ENCODE measurements at regions of chr6 and their contacts with region 1.

Region 1: GRCh38 chr6:53484476-53485280 is 60.2 kb downstream of the GCLC start:
- DNase-seq: peak; percentile 79
- H3K4me3 ChIP-seq: no peak overlapping the region
- H3K27ac ChIP-seq: no peak overlapping the region
- H3K4me1 ChIP-seq: peaks cover 4% of the 10 kb centered on the region
- CTCF ChIP-seq: peak; percentile 100

Region 2: DNA sequence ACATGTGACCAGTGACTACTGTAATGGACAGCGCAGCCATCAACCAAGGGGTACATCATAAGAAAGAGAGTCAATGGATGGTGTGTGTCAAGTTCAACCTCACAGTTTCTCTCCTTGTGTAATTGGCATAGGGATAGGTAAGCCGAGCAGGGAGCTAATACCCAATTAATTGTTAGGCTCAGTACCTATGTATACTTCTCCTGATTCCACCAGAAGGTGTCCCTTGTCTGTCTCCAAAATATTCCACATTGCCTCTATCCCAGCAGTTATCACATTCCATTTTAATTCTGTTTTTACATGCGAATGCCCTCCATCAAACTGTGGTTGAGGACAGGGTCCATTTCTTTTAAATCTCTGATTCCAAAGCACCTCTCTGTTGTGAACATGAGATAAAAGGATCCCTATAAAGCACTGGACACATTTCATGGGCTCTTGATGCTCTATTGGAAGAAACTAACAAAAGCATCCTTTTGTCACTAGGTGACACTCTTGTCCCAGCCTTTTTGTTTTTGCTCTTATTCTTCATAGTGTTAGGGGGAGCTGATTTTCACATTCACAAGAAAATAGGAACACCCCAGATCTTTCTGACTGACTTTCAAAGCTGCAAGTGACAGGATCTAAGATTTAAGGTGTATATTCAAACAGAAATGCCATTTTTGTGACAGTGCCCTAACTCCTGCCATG is 380.5 kb before region 1 on chr6:
- CTCF ChIA-PET with region 1: no interaction called
- POLR2A ChIA-PET with region 1: no interaction called
- intact Hi-C with region 1: loop called (anchors 5 kb)
- DNase-seq: peak; percentile 19
- H3K4me3 ChIP-seq: no peak overlapping the region
- H3K27ac ChIP-seq: no peak overlapping the region
- H3K4me1 ChIP-seq: no peaks in the 10 kb centered on the region
- CTCF ChIP-seq: peak; percentile 65

Region 3: DNA sequence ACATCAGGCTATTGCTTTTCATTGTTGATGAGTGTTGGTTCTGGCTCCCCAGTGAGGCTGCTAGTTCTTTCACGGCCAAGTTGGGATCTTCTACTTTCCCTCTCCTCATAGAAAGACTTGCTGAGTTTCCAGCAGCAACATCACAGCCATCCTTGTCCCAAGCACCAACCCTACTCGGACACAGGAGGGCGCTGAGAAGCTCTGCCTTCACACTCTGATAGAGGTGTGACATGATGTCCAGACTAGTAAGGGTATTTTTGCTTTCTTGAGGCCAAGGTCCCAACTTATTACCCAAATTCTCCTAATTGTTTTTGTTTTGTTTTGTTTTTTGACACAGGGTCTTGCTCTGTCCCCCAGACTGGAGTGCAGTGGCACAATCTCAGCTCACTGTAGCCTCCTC is 333.0 kb before region 1 on chr6:
- CTCF ChIA-PET with region 1: no interaction called
- POLR2A ChIA-PET with region 1: no interaction called
- intact Hi-C with region 1: loop called (anchors 5 kb)
- DNase-seq: peak; percentile 35
- H3K4me3 ChIP-seq: no peak overlapping the region
- H3K27ac ChIP-seq: no peak overlapping the region
- H3K4me1 ChIP-seq: no peaks in the 10 kb centered on the region
- CTCF ChIP-seq: peak; percentile 74

Region 4: DNA sequence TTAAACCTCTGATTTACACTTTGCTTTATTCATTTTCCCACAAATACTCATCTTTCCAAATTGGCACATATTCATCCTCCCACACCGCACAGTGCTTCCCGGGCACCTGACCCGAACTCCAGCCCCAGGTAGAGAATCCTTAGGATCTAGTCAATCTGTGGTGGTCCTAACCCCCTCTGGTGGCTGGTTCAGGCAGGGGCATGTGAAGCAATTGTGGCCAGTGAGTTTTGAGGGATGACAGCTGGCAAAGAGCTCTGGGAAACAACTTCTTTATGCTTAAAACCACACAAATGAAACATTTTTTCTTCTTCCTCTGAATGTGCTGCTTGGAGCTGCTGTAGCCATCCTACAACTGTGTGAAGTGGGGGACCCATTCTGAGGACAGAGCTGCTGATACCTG is 190.6 kb before region 1 on chr6:
- CTCF ChIA-PET with region 1: no interaction called
- POLR2A ChIA-PET with region 1: no interaction called
- intact Hi-C with region 1: loop called (anchors 2 kb)
- DNase-seq: peak; percentile 54
- H3K4me3 ChIP-seq: no peak overlapping the region
- H3K27ac ChIP-seq: no peak overlapping the region
- H3K4me1 ChIP-seq: peaks cover 16% of the 10 kb centered on the region
- CTCF ChIP-seq: peak; percentile 95

Region 5: DNA sequence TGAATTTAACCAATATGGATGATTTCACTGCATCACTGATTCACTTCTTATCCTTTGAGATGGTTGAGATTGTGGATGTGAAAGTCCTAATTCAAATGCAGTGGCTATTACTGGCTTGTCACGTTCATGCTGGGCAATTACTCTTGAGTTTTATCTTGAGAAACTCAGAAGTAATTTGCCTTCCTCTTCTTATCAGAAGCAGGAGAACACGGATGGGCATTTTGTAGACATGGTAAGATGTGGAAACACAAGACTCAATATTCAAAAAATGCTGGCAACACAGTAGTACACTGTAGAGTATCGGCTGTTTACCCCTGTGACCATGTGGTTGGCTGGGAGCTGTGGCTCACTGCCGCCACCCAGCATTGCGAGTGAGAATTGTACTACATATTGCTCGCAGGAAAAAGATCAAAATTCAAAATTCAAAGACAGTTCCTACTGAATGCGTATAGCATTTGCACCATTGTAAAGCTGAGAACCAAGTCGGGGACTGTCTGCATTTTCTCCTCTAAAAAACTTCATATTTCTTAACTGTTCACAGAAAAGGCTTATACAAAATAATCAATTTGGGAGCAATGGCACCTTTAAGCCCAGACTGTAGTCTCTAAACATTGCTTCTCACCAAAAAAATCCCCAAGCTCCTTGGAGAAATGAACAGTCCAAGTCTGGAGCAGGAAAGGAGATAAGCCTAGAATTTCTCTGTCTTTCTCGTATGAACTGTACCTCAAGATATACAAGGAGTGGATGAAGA is 74.0 kb before region 1 on chr6:
- CTCF ChIA-PET with region 1: no interaction called
- POLR2A ChIA-PET with region 1: no interaction called
- intact Hi-C with region 1: loop called (anchors 1 kb)
- DNase-seq: peak; percentile 80
- H3K4me3 ChIP-seq: peak overlapping the region; percentile 19
- H3K27ac ChIP-seq: peak overlapping the region; percentile 39
- H3K4me1 ChIP-seq: peaks cover 17% of the 10 kb centered on the region
- CTCF ChIP-seq: peak; percentile 99

Region 6: DNA sequence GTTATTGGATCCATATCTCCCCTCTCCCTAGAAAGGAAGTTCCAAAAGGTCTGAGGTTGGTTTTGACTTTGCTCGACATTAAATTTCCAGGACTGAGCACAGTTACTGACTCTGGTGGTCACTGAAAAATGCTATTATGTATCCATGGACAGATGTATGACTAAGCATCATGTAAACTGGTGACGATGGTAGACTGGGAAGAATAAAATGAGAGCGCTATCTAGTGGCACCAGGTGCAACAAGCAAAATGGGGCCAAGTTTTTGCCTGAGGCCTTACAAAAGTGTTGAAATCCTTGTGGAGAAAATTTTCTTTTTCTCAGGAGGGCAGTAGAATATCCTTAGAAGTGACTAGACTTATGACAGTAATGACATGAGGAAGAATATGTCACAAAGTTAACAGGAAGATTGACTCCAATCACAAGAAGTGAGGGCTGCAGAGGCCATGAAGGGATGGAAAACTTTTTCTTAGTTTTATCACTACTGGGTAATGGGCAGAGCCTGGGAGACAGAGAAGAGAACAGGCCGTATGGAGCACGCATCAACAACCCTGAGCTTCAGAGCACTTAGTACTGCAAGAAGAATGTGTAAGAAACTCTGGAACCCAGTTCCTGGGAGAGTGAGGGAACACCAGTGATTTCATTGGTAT is 47.0 kb before region 1 on chr6:
- CTCF ChIA-PET with region 1: no interaction called
- POLR2A ChIA-PET with region 1: no interaction called
- intact Hi-C with region 1: loop called (anchors 1 kb)
- DNase-seq: peak; percentile 64
- H3K4me3 ChIP-seq: no peak overlapping the region
- H3K27ac ChIP-seq: no peak overlapping the region
- H3K4me1 ChIP-seq: no peaks in the 10 kb centered on the region
- CTCF ChIP-seq: peak; percentile 95

Region 7: GRCh38 chr6:53506872-53507271 is 22.2 kb after region 1 on chr6:
- CTCF ChIA-PET with region 1: no interaction called
- POLR2A ChIA-PET with region 1: no interaction called
- intact Hi-C with region 1: no loop called
- DNase-seq: no peak
- H3K4me3 ChIP-seq: no peak overlapping the region
- H3K27ac ChIP-seq: no peak overlapping the region
- H3K4me1 ChIP-seq: no peaks in the 10 kb centered on the region
- CTCF ChIP-seq: no peak